OCI-LY7 (cell line): ENCODE measurements at regions of chr17 and their contacts with region 1.

Region 1: GRCh38 chr17:75749545-75750389 is 15.2 kb downstream of the GALK1 start:
- DNase-seq: peak; percentile 92
- H3K4me3 ChIP-seq: no peak overlapping the region
- H3K27ac ChIP-seq: no peak overlapping the region
- H3K4me1 ChIP-seq: peaks cover 45% of the 10 kb centered on the region
- CTCF ChIP-seq: peak; percentile 100

Region 2: DNA sequence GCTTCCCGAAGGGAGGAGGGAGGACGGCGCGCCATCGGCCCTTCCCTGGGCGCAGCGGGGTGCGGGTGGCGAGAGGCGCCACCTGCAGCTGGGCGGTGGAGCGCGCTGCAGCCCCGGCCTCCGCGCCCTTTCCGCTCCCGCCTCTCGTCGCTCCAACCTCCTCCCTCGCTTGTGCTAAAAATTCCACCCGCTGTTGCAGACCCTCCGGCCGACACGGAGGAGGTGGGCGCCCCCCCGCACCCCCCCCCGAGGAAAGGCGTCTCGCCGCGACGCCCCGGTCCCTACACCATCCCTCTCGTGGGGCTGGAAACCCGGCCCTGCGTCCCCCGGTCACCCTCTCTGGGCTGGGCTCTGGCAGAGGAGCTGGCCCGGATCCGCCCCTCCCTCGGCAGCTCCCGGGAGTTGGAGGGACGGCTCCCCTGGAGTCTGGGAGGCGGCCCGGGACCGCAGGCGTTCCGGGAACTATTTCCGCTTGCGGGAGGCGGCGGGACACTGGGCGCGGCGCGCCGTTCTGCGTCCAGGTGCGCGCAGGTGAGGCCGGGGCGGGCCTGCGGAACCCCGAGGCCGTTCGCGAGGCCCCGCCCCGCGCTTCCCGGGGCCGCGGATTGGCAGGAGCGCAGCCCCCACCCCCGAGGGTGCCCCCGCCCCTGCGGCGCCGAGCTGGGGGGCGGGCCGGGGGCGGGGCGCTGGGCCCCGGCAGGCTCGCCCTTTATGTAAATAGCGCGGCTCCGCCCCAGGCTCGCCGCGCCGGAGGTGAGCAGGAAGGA is 224.6 kb before region 1 on chr17 and contains the start of gene LLGL2:
- CTCF ChIA-PET with region 1: no interaction called
- POLR2A ChIA-PET with region 1: no interaction called
- intact Hi-C with region 1: loop called (anchors 2 kb)
- DNase-seq: peak; percentile 94
- H3K4me3 ChIP-seq: peak within 1 kb of the TSS; percentile 72
- H3K27ac ChIP-seq: peak within 1 kb of the TSS; percentile 12
- H3K4me1 ChIP-seq: peaks cover 19% of the 10 kb centered on the region
- CTCF ChIP-seq: peak; percentile 75
- total RNA-seq, gene LLGL2: 10.7 and 12.6 TPM in 2 replicates

Region 3: DNA sequence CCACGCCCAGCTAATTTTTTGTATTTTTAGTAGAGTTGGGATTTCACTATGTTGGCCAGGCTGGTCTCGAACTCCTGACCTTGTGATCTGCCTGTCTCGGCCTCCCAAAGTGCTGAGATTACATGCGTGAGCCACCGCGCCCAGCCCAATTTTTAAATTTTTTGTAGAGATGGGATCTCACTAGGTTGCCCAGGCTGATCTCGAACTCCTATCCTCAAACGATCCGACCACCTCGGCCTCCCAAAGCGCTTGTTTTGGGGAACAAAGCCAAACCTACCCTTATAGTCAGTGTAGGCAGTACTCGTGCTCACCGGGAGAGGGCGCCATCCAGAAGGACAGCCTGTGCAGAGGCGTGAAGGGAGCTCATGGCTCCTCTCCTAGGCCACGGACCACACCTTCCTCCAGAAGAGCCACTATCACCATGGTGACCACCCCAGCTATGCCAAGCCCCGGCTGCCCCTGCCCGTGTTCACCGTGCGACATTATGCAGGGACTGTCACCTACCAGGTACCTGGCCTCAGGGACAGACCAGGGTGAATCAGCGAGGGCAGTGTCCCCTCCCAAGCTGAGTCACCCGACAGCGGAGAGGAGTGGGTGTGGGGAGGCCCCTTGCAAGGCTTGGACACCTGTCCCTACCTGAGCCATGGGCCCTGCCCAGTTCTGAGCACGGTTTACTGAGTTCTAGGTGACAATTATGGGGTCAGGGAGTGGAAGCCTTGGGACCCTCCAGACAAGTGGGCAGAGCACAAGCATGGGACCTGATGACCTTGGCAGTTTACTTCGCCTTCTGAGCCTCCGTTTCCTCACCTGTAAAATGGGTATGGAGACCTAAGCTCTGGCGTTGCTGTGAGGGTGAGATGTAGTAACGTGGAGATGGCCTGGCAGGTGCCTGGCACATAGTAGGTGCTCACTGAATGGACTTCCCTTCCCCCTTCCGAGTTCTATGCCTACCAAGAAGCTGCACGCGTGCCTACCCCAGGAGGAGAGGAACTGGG is 148.4 kb before region 1 on chr17:
- CTCF ChIA-PET with region 1: interaction called, 22 read pairs
- POLR2A ChIA-PET with region 1: no interaction called
- intact Hi-C with region 1: loop called (anchors 1 kb)
- DNase-seq: peak; percentile 78
- H3K4me3 ChIP-seq: no peak overlapping the region
- H3K27ac ChIP-seq: no peak overlapping the region
- H3K4me1 ChIP-seq: no peaks in the 10 kb centered on the region
- CTCF ChIP-seq: peak; percentile 97

Region 4: GRCh38 chr17:75632863-75633485 is 116.8 kb before region 1 on chr17 and contains the start of gene SMIM5:
- CTCF ChIA-PET with region 1: interaction called, 35 read pairs
- POLR2A ChIA-PET with region 1: interaction called, 5 read pairs
- intact Hi-C with region 1: loop called (anchors 1 kb)
- DNase-seq: peak; percentile 87
- H3K4me3 ChIP-seq: no peak within 1 kb of the TSS
- H3K27ac ChIP-seq: peak within 1 kb of the TSS; percentile 23
- H3K4me1 ChIP-seq: peaks cover 22% of the 10 kb centered on the region
- CTCF ChIP-seq: peak; percentile 99
- total RNA-seq, gene SMIM5: 0.06 TPM in 1 of 2 replicates, not detected in the other

Region 5: GRCh38 chr17:75689441-75689873 is 60.3 kb before region 1 on chr17:
- CTCF ChIA-PET with region 1: interaction called, 23 read pairs
- POLR2A ChIA-PET with region 1: interaction called, 5 read pairs
- intact Hi-C with region 1: no loop called
- DNase-seq: peak; percentile 98
- H3K4me3 ChIP-seq: peak overlapping the region; percentile 53
- H3K27ac ChIP-seq: peak overlapping the region; percentile 97
- H3K4me1 ChIP-seq: peaks cover 69% of the 10 kb centered on the region
- CTCF ChIP-seq: no peak

Region 6: DNA sequence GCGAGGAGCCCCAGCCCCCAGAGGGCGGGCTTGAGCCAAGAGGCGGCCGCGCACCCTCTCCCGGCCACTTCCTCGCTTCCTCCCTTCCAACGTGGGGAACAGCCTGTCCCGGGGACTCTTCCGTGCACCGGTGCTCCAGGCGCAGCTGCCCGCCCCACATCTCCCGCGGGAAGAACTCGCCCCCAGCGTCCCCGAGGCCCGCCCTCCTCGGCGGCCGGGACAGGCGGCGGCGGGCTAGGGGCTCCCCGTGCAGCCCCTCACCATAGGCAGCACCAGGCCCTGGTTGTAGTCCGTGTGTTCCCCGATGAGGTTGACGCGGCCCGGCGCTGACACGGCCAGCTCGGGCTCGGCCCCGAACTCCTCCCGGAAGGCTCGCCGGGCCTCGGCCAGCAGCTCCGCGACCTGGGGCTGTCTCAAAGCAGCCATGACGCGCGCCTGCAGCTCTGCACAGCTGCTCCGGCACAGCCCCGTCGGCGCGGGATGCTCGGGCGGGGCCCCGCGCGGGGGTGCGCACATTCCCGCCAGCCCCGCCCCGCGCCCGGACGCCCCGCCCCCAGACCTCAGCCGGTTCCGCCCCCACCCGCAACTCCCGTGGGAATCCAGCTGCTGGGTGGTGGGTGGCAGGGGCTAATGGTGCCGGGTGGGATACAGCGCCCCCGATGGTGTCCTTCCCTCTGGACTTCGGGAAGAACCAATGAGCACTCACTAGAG is 15.1 kb after region 1 on chr17 and contains the start of gene GALK1:
- CTCF ChIA-PET with region 1: interaction called, 15 read pairs
- POLR2A ChIA-PET with region 1: interaction called, 4 read pairs
- intact Hi-C with region 1: no loop called
- DNase-seq: peak; percentile 91
- H3K4me3 ChIP-seq: peak within 1 kb of the TSS; percentile 75
- H3K27ac ChIP-seq: peak within 1 kb of the TSS; percentile 22
- H3K4me1 ChIP-seq: peaks cover 18% of the 10 kb centered on the region
- CTCF ChIP-seq: peak; percentile 48
- total RNA-seq, gene GALK1: 88.2 and 99.4 TPM in 2 replicates